ENCODE measurements at regions of chr3 and their contacts with region 1.

Region 1: DNA sequence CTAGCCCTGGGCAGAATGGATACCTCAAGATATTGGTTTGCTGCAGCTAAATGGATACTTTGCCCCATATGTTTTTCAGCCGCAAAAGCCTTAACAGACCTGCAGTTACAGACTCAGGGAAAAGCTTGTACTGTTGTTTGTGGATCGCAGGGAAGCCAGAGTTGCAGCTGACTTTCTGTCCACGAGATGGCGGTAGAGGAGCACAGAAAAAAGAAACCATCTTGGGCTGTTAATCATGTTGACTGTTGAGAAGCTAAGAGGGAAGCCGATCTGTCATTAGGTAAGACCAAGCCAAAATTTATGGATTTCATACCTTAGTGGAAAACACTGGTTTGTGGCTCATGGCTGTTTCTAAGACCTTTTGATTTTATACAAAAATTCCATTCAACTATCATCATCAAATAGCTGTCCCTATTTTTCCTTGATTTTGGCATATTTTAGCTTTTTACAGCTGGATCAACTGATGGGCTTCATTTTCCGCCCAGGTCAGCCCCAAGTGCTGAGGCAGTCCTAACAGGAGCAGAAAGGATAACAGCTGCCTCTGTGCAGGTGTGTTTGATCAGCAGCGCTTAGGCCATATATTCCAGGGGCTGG is 205.7 kb upstream of the ZPLD1 start:
- DNase-seq: peak; percentile 76
- ATAC-seq: peak; percentile 76

Region 2: DNA sequence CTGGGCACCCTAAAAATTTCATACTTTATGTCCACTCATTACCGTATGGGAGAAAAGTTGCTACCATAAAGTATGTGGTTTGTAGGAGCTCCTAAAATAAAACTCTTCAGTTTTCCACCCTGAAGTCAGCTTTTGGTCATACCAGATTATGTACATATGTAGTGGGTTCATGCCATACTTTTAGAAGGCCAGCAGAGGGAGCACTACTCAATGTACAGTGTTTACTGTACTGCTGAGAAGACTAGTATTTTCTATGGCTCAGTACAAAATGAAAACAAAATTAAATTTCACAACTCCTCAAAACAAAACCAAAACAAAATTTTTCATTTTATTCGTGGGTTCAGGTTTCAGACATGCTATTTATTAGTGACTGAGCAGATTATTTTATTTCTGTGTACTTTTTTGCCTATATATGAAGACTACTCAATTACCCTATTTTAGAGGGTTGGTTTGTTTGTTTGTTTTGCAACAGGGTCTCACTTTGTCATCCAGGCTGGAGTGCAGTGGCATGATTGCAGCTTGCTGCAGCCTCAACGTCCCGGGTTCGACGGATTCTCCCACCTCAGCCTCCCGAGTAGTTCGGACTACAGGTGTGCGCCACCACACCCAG is 425.9 kb before region 1 on chr3:
- intact Hi-C with region 1: loop called (anchors 5 kb)
- DNase-seq: no peak
- ATAC-seq: peak; percentile 95

Region 3: DNA sequence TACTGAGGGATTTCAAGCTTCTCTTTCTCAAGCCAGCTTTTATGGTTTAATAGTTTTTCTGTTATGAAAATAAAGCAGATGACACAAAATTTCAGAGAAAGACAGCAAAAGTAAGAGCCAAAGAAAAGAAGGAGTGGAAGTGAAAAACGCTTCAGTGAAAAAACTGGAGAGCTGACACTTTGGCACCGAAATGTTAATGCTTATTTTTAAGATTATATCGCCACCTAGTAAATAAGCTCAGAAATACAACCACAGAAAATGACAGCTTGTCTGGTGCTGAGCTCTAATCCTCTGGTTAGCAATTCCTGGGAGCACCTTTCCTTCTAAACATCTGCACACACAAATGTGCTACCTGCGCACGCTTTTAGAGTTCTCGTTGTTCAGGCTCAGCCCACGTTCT is 307.3 kb after region 1 on chr3:
- intact Hi-C with region 1: loop called (anchors 5 kb)
- DNase-seq: no peak
- ATAC-seq: peak; percentile 67